SK-N-SH (cell line): ENCODE measurements at regions of chr2 and their contacts with region 1.

Region 1: DNA sequence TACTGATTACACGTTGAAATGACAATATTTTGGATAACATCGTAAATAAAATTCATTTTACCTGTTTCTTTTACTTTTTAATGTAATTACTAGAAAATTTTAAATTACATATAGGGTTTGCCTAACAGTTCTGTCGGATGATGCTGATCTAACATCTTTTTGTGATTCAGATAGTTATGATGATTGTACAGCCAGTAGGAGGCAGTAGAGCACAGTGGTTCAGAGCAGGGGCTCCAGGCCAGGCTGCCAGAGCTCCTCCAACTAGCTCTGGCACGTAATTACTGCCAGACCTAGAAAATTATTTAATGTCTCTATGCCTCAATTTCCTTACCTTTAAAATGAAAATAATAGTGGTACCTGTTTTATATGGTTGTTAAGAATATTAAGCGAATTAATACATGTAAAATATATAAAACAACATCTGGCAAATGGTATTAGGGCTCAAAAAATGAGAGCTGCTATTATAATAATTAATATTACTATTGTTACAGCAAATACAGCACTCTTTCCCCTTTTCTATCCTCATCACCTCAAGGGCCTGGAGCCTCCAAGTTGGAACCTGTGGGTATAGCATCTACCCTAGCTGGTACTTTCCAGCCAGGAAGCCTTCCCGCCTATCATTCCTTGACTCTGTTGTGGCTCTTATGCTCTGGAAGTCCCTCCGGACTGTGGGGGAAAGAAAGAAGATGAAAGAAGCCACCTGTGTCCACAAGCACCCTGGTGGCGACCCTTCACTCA is 47.7 kb upstream of the PLA2R1 start:
- DNase-seq: peak; percentile 71
- H3K4me3 ChIP-seq: no peak overlapping the region; a peak in 1 of 4 replicates
- H3K27ac ChIP-seq: peak overlapping the region in 1 of 2 experiments; percentile 58; a peak in 1 of 4 replicates
- H3K4me1 ChIP-seq: peaks cover 5 to 7% of the 10 kb centered on the region in 2 experiments; a peak in 2 of 4 replicates
- H3K27me3 ChIP-seq: no peaks in the 10 kb centered on the region
- CTCF ChIP-seq: peak; percentile 90
- EP300 ChIP-seq: peak in 1 of 2 experiments; percentile 44; a peak in 3 of 4 replicates
- RAD21 ChIP-seq: peak; percentile 99

Region 2: GRCh38 chr2:160091381-160091780 is 18.7 kb before region 1 on chr2:
- CTCF ChIA-PET with region 1: interaction called, 19 read pairs
- POLR2A ChIA-PET with region 1: no interaction called
- DNase-seq: no peak
- H3K4me3 ChIP-seq: no peak overlapping the region
- H3K27ac ChIP-seq: no peak overlapping the region
- H3K4me1 ChIP-seq: no peaks in the 10 kb centered on the region
- H3K27me3 ChIP-seq: no peaks in the 10 kb centered on the region
- CTCF ChIP-seq: no peak
- EP300 ChIP-seq: no peak
- RAD21 ChIP-seq: no peak

Region 3: GRCh38 chr2:160210599-160211138 is 100.6 kb after region 1 on chr2:
- CTCF ChIA-PET with region 1: interaction called, 16 read pairs
- POLR2A ChIA-PET with region 1: no interaction called
- DNase-seq: peak; percentile 52
- H3K4me3 ChIP-seq: no peak overlapping the region
- H3K27ac ChIP-seq: peak overlapping the region; percentile 95 to 97; a peak in 3 of 4 replicates
- H3K4me1 ChIP-seq: peaks cover 19 to 64% of the 10 kb centered on the region in 2 experiments
- H3K27me3 ChIP-seq: no peaks in the 10 kb centered on the region
- CTCF ChIP-seq: peak; percentile 81
- EP300 ChIP-seq: no peak
- RAD21 ChIP-seq: peak; percentile 61

Region 4: DNA sequence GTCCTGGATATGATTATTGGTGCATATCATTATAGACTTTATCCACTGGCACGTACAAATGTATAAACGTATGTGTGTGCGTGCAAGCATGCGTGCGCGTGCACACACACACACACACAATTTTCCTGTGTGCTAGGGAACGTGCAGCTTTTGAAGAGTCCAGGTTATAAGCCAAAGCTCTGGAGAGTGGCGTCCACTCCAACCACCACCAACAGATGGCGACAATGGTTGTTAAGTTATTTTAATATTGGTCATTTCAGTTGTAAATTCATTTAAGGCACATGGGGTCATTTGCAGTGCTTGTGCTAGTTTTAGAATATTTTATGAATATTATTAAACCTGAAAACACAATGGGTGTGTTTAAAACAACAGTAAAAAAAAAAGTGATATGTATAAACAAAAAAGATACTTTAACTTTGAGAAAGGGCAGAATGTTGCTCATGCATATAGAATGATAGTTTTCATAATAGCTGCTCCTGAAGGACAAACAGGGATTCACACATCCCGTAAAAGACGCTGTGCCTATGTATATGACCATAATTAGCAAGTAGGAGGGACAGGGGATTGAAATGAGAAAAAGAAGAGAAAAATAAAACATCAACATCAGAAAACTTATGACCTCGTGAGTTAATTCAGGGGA is 214.2 kb after region 1 on chr2:
- CTCF ChIA-PET with region 1: interaction called, 14 read pairs
- POLR2A ChIA-PET with region 1: no interaction called
- DNase-seq: peak; percentile 39
- H3K4me3 ChIP-seq: no peak overlapping the region
- H3K27ac ChIP-seq: 0 out of 4 replicates have a peak overlapping the region, but pooled peaks of 1 of the 2 experiments have one; percentile 20
- H3K4me1 ChIP-seq: peaks cover 0 to 3% of the 10 kb centered on the region in 2 experiments; a peak in 3 of 4 replicates
- H3K27me3 ChIP-seq: no peaks in the 10 kb centered on the region
- CTCF ChIP-seq: peak; percentile 81
- EP300 ChIP-seq: no peak
- RAD21 ChIP-seq: peak; percentile 80

Region 5: GRCh38 chr2:161004379-161004778 is 894.3 kb after region 1 on chr2:
- CTCF ChIA-PET with region 1: interaction called, 12 read pairs
- POLR2A ChIA-PET with region 1: no interaction called
- DNase-seq: peak; percentile 28
- H3K4me3 ChIP-seq: no peak overlapping the region
- H3K27ac ChIP-seq: no peak overlapping the region
- H3K4me1 ChIP-seq: no peaks in the 10 kb centered on the region
- H3K27me3 ChIP-seq: no peaks in the 10 kb centered on the region
- CTCF ChIP-seq: peak; percentile 61
- EP300 ChIP-seq: no peak
- RAD21 ChIP-seq: peak; percentile 54